HCT116 (cell line): ENCODE measurements at regions of chr5 and their contacts with region 1.

Region 1: DNA sequence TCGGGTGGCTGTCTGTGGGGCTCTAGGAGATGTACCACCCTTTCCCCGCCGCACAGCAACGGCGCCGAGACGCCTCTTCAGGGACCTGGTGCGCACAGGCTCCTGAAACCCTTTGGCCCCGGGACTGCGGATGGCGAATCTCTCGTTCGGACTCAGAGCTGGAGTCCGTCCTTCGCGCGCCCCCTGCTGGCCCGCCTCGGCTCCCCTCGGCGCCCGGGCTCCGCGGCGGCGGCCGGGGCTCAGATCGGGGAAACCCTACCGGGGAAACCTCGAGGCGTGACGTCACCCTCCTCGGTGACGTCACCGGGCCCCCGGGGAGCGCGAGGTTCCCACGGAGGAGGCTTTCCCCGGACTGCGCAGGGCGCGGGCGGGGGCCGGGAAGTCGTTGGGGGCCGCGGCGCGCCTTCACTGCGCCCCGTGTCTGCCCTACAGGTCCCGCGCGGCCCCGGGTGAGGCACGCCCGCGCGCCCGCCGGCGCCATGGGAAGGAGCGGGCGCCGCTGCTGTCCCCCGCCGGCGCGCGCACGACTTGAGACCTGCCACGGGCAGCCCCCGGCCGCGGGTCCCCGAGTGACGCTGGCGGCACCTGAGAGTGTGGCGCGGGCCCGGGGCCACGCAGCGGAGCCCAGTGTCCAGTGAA is 7.9 kb downstream of the PRR7 start:
- DNase-seq: peak; percentile 62
- ATAC-seq: peak; percentile 52
- H3K4me3 ChIP-seq: peak overlapping the region; percentile 68 to 76
- H3K27ac ChIP-seq: peak overlapping the region; percentile 96
- H3K4me1 ChIP-seq: peaks cover 18 to 60% of the 10 kb centered on the region in 2 experiments; a peak in 3 of 4 replicates
- H3K27me3 ChIP-seq: no peaks in the 10 kb centered on the region
- CTCF ChIP-seq: peak in 2 of 3 experiments; percentile 76 to 95; a peak in 4 of 6 replicates
- POLR2A ChIP-seq: no peak
- RAD21 ChIP-seq: no peak

Region 2: GRCh38 chr5:177311723-177312648 is 142.5 kb before region 1 on chr5 and contains the start of gene MXD3:
- CTCF ChIA-PET with region 1: interaction called, 10 read pairs
- POLR2A ChIA-PET with region 1: interaction called, 3 read pairs
- RAD21 ChIA-PET with region 1: interaction called, 3 read pairs
- intact Hi-C with region 1: loop called (anchors 1 kb)
- DNase-seq: peak; percentile 91
- ATAC-seq: peak; percentile 77
- H3K4me3 ChIP-seq: peak within 1 kb of the TSS; percentile 82 to 87
- H3K27ac ChIP-seq: peak within 1 kb of the TSS; percentile 82
- H3K4me1 ChIP-seq: peaks cover 18 to 45% of the 10 kb centered on the region in 2 experiments
- H3K27me3 ChIP-seq: no peaks in the 10 kb centered on the region
- CTCF ChIP-seq: no peak
- POLR2A ChIP-seq: no peak
- RAD21 ChIP-seq: no peak
- total RNA-seq, gene MXD3: 37.6 TPM

Region 3: DNA sequence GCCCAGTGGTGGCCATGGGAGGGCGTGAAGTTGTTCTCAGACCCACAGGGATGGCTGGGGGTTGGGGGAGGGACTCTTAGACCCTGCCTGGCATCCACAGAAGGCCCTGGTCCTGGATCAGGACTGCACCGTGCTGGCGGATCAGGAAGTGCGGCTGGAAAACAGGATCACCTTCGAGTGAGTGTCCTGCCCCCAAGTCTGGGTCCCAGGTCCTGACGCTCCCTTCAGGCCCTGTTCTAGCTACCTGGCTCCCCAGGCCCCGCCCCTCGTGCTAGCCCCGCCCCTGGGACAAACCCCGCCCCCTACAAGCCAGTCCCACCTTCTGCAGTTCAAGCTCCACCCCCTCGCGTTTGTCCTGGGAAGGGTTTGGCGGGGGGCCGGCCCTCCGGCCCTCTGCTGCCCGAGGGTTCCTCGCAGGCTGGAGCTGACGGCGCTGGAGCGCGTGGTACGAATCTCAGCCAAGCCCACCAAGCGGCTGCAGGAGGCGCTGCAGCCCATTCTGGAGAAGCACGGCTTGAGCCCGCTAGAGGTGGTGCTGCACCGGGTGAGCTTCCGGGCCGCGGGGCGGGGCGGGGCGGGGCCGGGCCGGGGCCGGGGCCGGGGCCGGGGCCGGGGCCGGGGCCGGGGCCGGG is 83.9 kb before region 1 on chr5:
- CTCF ChIA-PET with region 1: interaction called, 17 read pairs
- POLR2A ChIA-PET with region 1: no interaction called
- RAD21 ChIA-PET with region 1: no interaction called
- intact Hi-C with region 1: no loop called
- DNase-seq: peak; percentile 94
- ATAC-seq: peak; percentile 90
- H3K4me3 ChIP-seq: peak overlapping the region; percentile 74 to 78
- H3K27ac ChIP-seq: peak overlapping the region; percentile 70
- H3K4me1 ChIP-seq: peaks cover 22 to 48% of the 10 kb centered on the region in 2 experiments
- H3K27me3 ChIP-seq: no peaks in the 10 kb centered on the region
- CTCF ChIP-seq: peak in 2 of 3 experiments; percentile 58 to 65; a peak in 4 of 6 replicates
- POLR2A ChIP-seq: no peak
- RAD21 ChIP-seq: no peak

Region 4: GRCh38 chr5:177403792-177404640 is 50.5 kb before region 1 on chr5:
- CTCF ChIA-PET with region 1: interaction called, 85 read pairs
- POLR2A ChIA-PET with region 1: interaction called, 7 read pairs
- RAD21 ChIA-PET with region 1: interaction called, 3 read pairs
- intact Hi-C with region 1: loop called (anchors 1 kb)
- DNase-seq: peak; percentile 56
- ATAC-seq: peak; percentile 72
- H3K4me3 ChIP-seq: peak overlapping the region; percentile 69 to 82
- H3K27ac ChIP-seq: peak overlapping the region; percentile 99
- H3K4me1 ChIP-seq: peaks cover 15 to 37% of the 10 kb centered on the region in 2 experiments
- H3K27me3 ChIP-seq: no peaks in the 10 kb centered on the region
- CTCF ChIP-seq: peak in 2 of 3 experiments; percentile 55 to 69; a peak in 4 of 6 replicates
- POLR2A ChIP-seq: no peak
- RAD21 ChIP-seq: no peak

Region 5: GRCh38 chr5:177478711-177479646 is 24.5 kb after region 1 on chr5:
- CTCF ChIA-PET with region 1: interaction called, 11 read pairs
- POLR2A ChIA-PET with region 1: interaction called, 6 read pairs
- RAD21 ChIA-PET with region 1: no interaction called
- intact Hi-C with region 1: no loop called
- DNase-seq: no peak
- ATAC-seq: no peak
- H3K4me3 ChIP-seq: no peak overlapping the region
- H3K27ac ChIP-seq: no peak overlapping the region
- H3K4me1 ChIP-seq: peaks cover 2 to 21% of the 10 kb centered on the region in 2 experiments; a peak in 2 of 4 replicates
- H3K27me3 ChIP-seq: no peaks in the 10 kb centered on the region
- CTCF ChIP-seq: no peak
- POLR2A ChIP-seq: no peak
- RAD21 ChIP-seq: no peak

Region 6: GRCh38 chr5:177557041-177557647 is 102.6 kb after region 1 on chr5:
- CTCF ChIA-PET with region 1: no interaction called
- POLR2A ChIA-PET with region 1: no interaction called
- RAD21 ChIA-PET with region 1: no interaction called
- intact Hi-C with region 1: no loop called
- DNase-seq: no peak
- ATAC-seq: no peak
- H3K4me3 ChIP-seq: no peak overlapping the region
- H3K27ac ChIP-seq: no peak overlapping the region
- H3K4me1 ChIP-seq: peaks cover 11 to 22% of the 10 kb centered on the region in 2 experiments; a peak in 3 of 4 replicates
- H3K27me3 ChIP-seq: no peaks in the 10 kb centered on the region
- CTCF ChIP-seq: no peak
- POLR2A ChIP-seq: no peak
- RAD21 ChIP-seq: no peak